ENCODE measurements at regions of chr22 and their contacts with region 1.

Region 1: DNA sequence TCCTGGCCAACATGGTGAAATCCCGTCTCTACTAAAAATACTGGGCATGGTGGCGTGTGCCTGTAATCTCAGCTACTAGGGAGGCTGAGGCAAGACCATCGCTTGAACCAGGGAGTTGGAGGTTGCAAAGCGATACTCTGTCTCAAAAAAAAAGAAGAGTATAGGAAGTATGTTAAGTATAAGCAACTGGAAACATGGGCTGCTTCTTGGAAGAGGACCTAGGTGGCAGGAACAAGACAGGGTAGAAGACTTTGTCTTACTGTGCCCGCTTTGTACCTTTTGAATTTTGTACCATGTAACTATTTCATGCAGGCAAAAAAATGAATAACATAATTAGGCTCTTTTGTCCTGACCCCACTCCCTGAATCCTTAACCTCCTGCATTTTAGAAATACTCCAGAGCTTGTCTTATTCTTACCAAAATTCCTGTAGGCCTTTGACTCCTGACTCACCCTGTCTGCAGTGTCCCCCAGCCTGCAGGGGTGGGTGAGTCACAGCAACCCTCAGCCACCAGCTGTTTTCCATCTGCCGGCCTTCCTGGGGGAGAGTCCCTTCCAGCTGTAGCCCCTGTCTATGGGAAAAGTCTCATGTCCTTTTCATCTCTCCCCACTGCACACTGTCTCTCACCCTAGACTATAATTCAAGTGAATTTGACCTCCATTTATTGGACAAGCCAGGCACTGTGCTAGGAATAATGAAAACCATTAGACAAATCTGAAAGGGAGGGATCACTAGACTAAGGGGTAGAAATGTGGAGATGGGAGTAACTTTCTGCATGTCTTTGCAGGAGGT is 41.8 kb downstream of the TXN2 start:
- DNase-seq: peak; percentile 75
- H3K4me3 ChIP-seq: no peak overlapping the region
- H3K27ac ChIP-seq: peak overlapping the region; percentile 55
- H3K4me1 ChIP-seq: peaks cover 11% of the 10 kb centered on the region
- H3K27me3 ChIP-seq: no peaks in the 10 kb centered on the region
- CTCF ChIP-seq: no peak
- POLR2A ChIP-seq: no peak

Region 2: DNA sequence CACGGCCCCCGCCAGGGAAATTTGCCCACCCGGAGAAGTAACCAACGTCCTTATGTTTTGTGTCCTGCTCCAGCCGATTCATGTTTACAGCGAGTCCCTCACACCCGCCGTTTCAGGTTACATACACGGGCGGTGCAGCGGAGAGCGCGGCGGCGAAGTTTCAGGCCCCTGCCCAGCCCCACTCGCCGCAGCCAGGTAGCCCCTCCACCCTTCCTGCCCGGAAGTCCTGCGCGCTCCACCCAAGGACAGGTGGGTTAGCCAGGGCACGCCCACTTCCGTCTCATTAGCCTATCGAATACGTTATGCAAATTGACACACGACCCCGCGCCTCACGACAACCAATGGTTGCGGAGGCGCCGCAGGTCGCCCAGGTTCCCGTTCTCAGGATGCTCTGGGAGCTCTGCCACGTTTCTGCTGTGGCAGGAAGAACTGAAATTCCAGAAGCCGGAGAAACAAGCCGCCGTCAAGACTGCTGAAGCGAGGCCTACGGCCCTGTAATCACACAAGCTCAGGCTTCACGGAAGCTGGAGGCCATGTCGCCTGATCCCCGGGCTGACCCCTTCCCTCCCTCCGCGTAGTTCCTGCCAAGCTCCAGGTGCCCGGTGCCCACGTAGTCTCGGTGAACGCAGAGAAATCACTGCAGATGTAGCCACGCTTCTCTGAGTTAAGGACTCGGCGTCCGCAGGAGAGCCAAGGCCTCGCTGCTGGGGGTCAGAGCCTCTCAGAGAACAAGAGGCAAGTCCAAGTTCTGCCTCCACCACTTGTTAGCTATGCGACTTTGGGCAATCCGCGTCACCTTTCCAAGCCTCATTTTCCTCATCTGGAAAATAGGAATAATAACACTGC is 29.5 kb before region 1 on chr22:
- CTCF ChIA-PET with region 1: no interaction called
- POLR2A ChIA-PET with region 1: no interaction called
- dilution Hi-C with region 1: no loop called
- intact Hi-C with region 1: loop called (anchors 2 kb)
- DNase-seq: peak; percentile 60
- H3K4me3 ChIP-seq: no peak overlapping the region
- H3K27ac ChIP-seq: no peak overlapping the region
- H3K4me1 ChIP-seq: no peaks in the 10 kb centered on the region
- H3K27me3 ChIP-seq: no peaks in the 10 kb centered on the region
- CTCF ChIP-seq: no peak
- POLR2A ChIP-seq: no peak